A673 (cell line): ENCODE measurements at regions of chr19 and their contacts with region 1.

Region 1: DNA sequence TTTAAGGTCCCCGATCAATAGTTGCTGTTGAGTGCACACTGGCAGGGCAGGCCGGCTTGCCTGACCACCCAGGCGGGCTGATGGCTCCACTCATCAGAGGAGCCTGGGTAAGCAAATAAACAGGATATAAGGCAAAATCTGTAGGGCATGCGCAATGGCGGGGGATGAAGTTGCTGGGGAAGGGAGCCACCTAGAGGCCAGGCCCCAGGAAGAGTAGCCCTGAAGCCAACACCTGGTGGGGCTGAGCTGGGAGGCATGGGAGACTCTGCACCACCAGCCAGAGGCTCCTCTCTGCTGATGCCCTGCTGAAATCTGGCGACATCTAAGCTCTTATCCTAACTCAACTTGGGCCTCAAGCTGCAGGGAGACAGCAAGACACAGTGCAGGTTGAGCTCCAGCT is 324.3 kb downstream of the ZNF536 start:
- DNase-seq: peak; percentile 67
- H3K4me3 ChIP-seq: no peak overlapping the region
- H3K27ac ChIP-seq: no peak overlapping the region
- H3K4me1 ChIP-seq: peaks cover 31% of the 10 kb centered on the region
- H3K27me3 ChIP-seq: no peaks in the 10 kb centered on the region
- CTCF ChIP-seq: peak; percentile 73

Region 2: DNA sequence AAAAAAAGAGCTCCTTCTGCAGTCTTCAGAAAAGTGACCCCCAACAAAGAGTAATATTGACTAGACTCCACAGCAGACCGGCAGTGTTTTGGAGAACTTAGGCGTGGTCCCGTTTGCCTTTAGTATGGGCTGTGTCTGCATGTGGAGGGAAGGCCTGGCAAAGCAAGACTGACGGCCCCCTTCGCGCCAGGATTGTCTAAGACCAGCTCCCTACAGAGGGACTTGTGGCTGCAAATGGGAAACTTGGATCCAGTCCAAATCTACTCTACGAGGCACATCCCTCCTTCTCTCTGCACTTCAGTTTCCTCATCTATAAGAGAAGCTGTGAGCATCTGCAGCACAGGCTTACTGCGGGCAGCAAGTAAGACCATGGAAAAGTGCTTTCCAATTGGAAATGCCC is 25.7 kb after region 1 on chr19:
- CTCF ChIA-PET with region 1: interaction called, 13 read pairs
- POLR2A ChIA-PET with region 1: no interaction called
- intact Hi-C with region 1: no loop called
- DNase-seq: peak; percentile 34
- H3K4me3 ChIP-seq: no peak overlapping the region
- H3K27ac ChIP-seq: no peak overlapping the region
- H3K4me1 ChIP-seq: peaks cover 17% of the 10 kb centered on the region
- H3K27me3 ChIP-seq: no peaks in the 10 kb centered on the region
- CTCF ChIP-seq: no peak